ENCODE measurements at regions of chr1 and their contacts with region 1.

Region 1: GRCh38 chr1:22976461-22977243 is 4.0 kb upstream of the LACTBL1 start:
- DNase-seq: peak; percentile 69 to 91 (median 85)
- H3K4me3 ChIP-seq: no peak overlapping the region
- H3K27ac ChIP-seq: no peak overlapping the region
- H3K4me1 ChIP-seq: peaks cover 0 to 4% of the 10 kb centered on the region in 2 donors
- H3K27me3 ChIP-seq: no peaks in the 10 kb centered on the region
- CTCF ChIP-seq: peak; percentile 44 to 96 (median 91)
- POLR2A ChIP-seq: peak in 1 of 2 donors; percentile 8

Region 2: GRCh38 chr1:22500471-22500870 is 476.2 kb before region 1 on chr1:
- intact Hi-C with region 1: no loop called
- DNase-seq: peak; percentile 49 to 78 (median 68)
- H3K4me3 ChIP-seq: no peak overlapping the region
- H3K27ac ChIP-seq: peak overlapping the region in 4 of 5 donors; percentile 0 to 58 (median 26)
- H3K4me1 ChIP-seq: peaks cover 20 to 57% of the 10 kb centered on the region in 2 donors
- H3K27me3 ChIP-seq: no peaks in the 10 kb centered on the region
- CTCF ChIP-seq: peak in 1 of 6 experiments; percentile 13
- POLR2A ChIP-seq: no peak

Region 3: GRCh38 chr1:23079025-23079424 is 102.4 kb after region 1 on chr1:
- intact Hi-C with region 1: no loop called
- DNase-seq: no peak
- H3K4me3 ChIP-seq: no peak overlapping the region
- H3K27ac ChIP-seq: no peak overlapping the region
- H3K4me1 ChIP-seq: peaks cover 0 to 3% of the 10 kb centered on the region in 2 donors
- H3K27me3 ChIP-seq: no peaks in the 10 kb centered on the region
- CTCF ChIP-seq: no peak
- POLR2A ChIP-seq: no peak

Region 4: DNA sequence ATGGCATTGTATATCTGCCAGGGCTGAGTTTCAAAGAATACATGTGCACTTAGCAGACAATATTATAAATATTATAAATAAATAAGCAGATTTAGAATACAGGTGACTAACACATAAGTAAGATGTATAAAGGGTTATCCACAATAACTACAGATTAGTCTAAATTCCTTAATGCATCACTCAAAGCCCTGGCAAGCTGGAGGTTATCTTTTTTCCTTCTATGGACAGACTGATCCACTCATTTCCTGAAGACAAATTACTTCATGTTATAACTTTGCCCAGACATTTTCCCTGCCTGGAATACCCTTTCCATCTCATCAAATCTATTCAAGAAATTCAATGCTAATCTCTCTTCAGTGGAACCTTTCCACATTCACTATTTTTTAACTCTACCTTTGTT is 153.2 kb after region 1 on chr1:
- intact Hi-C with region 1: no loop called
- DNase-seq: no peak
- H3K4me3 ChIP-seq: no peak overlapping the region
- H3K27ac ChIP-seq: no peak overlapping the region
- H3K4me1 ChIP-seq: peaks cover 9 to 23% of the 10 kb centered on the region in 2 donors
- H3K27me3 ChIP-seq: no peaks in the 10 kb centered on the region
- CTCF ChIP-seq: no peak
- POLR2A ChIP-seq: no peak

Region 5: DNA sequence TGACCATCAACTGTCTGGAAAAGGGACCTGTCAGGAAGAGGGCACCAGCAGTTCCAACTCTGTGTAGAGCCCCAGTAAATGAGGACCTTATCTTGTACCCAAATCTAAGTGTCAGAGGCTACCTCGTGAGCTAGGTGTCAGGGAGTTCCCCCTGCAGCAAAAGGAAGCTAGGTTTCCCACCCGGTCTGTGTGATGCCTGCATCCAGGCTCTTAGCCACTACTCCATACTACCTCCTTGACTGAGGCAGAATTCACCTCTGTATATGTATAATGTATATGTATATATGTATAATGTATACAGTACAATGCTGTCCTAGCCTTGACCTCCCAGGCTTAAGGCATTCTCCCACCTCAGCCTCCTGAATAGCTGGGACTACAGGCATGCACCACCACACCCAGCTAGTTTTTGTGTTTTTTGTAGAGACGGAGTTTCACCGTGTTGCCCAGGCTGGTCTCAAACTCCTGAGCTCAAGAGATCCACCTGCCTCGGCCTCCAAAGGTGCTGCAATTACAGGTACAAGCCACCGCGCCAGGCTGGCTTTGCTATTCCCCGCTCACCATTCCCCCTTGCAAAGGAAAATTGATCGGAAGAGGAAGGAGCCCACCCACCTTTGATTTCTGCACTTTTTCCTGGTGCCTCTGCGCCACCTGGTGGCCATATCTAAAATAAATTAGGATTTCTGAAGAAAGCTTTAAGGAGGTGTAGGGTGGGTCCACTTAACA is 207.7 kb after region 1 on chr1:
- intact Hi-C with region 1: loop called (anchors 2 to 5 kb)
- DNase-seq: peak in 3 of 7 donors; percentile 25 to 41 (median 33)
- H3K4me3 ChIP-seq: peak overlapping the region in 2 of 4 donors; percentile 27 to 70
- H3K27ac ChIP-seq: no peak overlapping the region
- H3K4me1 ChIP-seq: peaks cover 0 to 5% of the 10 kb centered on the region in 2 donors
- H3K27me3 ChIP-seq: no peaks in the 10 kb centered on the region
- CTCF ChIP-seq: peak; percentile 86 to 98 (median 92)
- POLR2A ChIP-seq: no peak

Region 6: DNA sequence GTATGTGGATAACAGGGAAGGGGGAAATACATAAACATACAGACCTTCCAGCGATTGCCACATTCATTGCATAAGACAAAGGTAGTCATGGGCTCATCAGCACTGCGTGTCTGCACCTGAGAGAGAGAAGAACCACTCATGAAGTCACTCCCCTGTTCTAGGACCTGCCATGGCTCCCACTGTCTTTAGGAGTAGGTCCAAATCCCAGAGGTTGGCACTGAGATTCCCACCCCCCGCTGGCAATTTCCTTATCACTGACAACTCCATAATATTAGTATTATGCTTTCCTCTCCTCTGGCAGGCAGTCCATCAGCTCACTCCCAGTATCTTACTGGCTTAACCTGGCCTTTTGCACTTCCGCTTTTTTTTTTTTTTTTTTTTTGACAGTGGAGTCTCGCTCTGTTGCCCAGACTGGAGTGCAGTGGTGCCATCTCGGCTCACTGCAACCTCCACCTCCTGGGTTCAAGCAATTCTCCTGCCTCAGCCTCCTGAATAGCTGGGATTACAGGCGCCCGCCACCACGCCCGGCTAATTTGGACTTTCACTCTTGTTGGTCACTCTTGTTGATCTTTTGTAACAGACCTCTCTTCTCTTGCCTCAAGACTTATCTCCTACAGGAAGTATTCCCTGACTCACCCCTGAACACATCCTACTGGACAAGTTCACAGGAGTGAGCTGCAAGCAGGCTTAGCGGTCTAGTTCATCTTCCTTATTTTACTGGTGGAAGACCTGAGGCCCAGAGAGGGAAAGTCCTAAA is 407.8 kb after region 1 on chr1:
- intact Hi-C with region 1: no loop called
- DNase-seq: peak in 2 of 7 donors; percentile 16 to 27
- H3K4me3 ChIP-seq: no peak overlapping the region
- H3K27ac ChIP-seq: peak overlapping the region in 3 of 5 donors; percentile 0 to 72 (median 13)
- H3K4me1 ChIP-seq: peaks cover 0 to 7% of the 10 kb centered on the region in 2 donors
- H3K27me3 ChIP-seq: no peaks in the 10 kb centered on the region
- CTCF ChIP-seq: no peak
- POLR2A ChIP-seq: no peak

Measured in adrenal gland (tissue), 19 donors.